Activated CD4-positive, alpha-beta memory T cell treated with anti-CD3 and anti-CD28 coated beads for 36 hours (primary cell): ENCODE measurements at regions of chr19 and their contacts with region 1.

Region 1: GRCh38 chr19:8513687-8514504 is at the start of gene ZNF414:
- DNase-seq: peak; percentile 98
- H3K4me3 Mint-ChIP-seq: peak within 1 kb of the TSS; percentile 92
- H3K27ac Mint-ChIP-seq: peak within 1 kb of the TSS; percentile 99
- H3K4me1 Mint-ChIP-seq: peaks cover 49% of the 10 kb centered on the region
- H3K27me3 Mint-ChIP-seq: no peaks in the 10 kb centered on the region
- total RNA-seq, gene ZNF414: 19.7 to 24.6 TPM

Region 2: GRCh38 chr19:8412783-8413628 is 100.9 kb before region 1 on chr19 and contains the start of gene MARCHF2:
- CTCF ChIA-PET with region 1: interaction called, 11 read pairs
- POLR2A ChIA-PET with region 1: interaction called, 10 read pairs
- intact Hi-C with region 1: loop called (anchors 2 kb)
- DNase-seq: peak; percentile 98
- H3K4me3 Mint-ChIP-seq: peak within 1 kb of the TSS; percentile 67
- H3K27ac Mint-ChIP-seq: no peak within 1 kb of the TSS
- H3K4me1 Mint-ChIP-seq: peaks cover 11% of the 10 kb centered on the region
- H3K27me3 Mint-ChIP-seq: no peaks in the 10 kb centered on the region
- total RNA-seq, gene MARCHF2: 14.5 to 16.0 TPM

Region 3: GRCh38 chr19:8444645-8445487 is 69.0 kb before region 1 on chr19 and contains the start of gene HNRNPM:
- CTCF ChIA-PET with region 1: no interaction called
- POLR2A ChIA-PET with region 1: interaction called, 9 read pairs
- intact Hi-C with region 1: loop called (anchors 1 kb)
- DNase-seq: peak; percentile 100
- H3K4me3 Mint-ChIP-seq: peak within 1 kb of the TSS; percentile 90
- H3K27ac Mint-ChIP-seq: peak within 1 kb of the TSS; percentile 98
- H3K4me1 Mint-ChIP-seq: peaks cover 36% of the 10 kb centered on the region
- H3K27me3 Mint-ChIP-seq: no peaks in the 10 kb centered on the region
- total RNA-seq, gene HNRNPM: 237 to 238 TPM

Region 4: GRCh38 chr19:8487137-8487851 is 26.6 kb before region 1 on chr19:
- CTCF ChIA-PET with region 1: interaction called, 9 read pairs
- POLR2A ChIA-PET with region 1: interaction called, 7 read pairs
- intact Hi-C with region 1: loop called (anchors 1 kb)
- DNase-seq: peak; percentile 82
- H3K4me3 Mint-ChIP-seq: no peak overlapping the region
- H3K27ac Mint-ChIP-seq: peak overlapping the region; percentile 94
- H3K4me1 Mint-ChIP-seq: peaks cover 24% of the 10 kb centered on the region
- H3K27me3 Mint-ChIP-seq: no peaks in the 10 kb centered on the region

Region 5: DNA sequence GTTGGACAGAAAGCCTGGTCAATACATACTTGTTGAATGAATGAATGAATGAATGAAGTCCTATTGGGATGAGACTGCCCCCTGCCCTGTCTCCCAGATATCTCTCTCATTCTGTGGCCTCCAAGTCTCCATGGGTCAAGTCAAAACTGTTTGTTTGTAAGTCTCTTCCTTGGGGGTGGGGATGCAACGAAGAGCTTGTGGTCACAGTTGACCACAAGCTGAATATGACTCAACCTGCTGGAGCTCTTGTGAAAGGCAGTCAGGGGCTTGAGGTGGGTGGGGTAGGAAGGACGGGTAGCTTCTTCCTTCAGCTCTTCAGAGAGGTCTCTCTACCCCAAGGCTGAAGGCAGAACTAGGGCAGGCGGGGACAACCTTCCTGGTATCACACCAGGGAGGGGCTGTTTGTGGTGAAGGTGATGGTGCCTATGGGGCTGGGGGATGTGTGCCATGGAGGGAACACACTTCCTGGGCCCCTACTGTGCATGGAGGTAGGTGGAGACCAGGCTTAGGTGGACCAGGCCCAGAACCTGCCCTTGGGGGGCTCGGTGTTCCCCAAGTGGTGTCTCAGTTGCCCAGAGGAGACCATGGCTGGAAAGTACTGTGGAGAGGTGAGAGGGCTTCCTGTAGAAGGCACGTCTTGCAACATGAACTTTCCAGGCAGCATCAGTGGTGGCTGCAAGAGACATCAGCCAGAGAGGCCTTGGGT is 55.3 kb after region 1 on chr19:
- CTCF ChIA-PET with region 1: interaction called, 7 read pairs
- POLR2A ChIA-PET with region 1: interaction called, 4 read pairs
- intact Hi-C with region 1: loop called (anchors 1 kb)
- DNase-seq: peak; percentile 83
- H3K4me3 Mint-ChIP-seq: peak overlapping the region; percentile 52
- H3K27ac Mint-ChIP-seq: peak overlapping the region; percentile 94
- H3K4me1 Mint-ChIP-seq: peaks cover 66% of the 10 kb centered on the region
- H3K27me3 Mint-ChIP-seq: no peaks in the 10 kb centered on the region